ENCODE measurements at regions of chr2 and their contacts with region 1.

Region 1: DNA sequence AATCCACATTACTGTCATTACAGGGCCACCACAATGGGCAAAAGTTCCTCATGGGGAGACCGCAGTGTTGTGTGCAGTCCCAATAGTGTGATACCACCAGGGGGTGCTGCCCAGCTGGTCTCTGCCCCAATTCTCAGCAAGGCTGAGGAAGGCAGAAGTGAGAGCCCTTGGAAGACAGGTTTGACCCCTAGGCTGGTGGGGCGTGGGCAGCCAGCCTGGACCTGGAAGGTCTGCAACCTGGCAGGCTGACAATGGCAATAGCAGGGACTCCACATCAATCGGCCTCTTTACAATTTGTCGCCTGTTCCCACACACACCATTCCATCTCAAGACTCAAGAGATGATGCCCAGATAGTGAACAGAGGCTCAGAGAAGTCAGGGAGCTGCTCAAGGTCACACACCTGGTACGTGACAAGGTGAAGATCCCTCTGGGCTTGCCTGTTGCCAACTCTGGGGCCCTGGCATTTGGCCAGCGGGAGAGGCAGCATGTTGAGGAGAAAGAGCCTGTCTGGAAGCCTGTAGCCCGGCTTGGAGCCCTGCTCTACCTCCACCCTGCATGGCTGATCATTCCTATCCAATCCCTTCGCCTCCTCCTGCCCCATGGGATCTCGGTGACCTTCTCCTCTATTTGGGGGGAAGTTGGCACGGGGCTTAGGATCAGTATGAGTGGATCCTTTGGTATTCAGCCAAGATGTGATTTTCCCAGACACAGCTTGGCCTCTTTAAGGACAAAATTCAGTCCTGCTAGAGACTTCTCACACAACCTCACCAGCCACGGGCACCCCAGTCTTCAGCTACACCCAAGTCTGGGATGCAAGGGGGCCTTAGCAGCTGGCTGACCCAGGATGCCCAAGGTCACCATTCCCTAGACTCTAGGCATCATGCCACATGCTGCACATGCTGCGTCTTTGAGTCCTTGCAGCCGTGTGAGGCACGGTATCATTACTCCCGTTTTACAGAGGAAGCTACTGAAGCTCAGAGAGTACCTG is 2.9 kb upstream of the ATOH8 start:
- DNase-seq: peak; percentile 70
- ATAC-seq: peak; percentile 80
- H3K4me3 ChIP-seq: no peak overlapping the region
- H3K27ac ChIP-seq: no peak overlapping the region
- H3K4me1 ChIP-seq: peaks cover 26% of the 10 kb centered on the region
- H3K27me3 ChIP-seq: peaks cover 10 to 56% of the 10 kb centered on the region in 2 experiments; a peak in 4 of 5 replicates
- CTCF ChIP-seq: peak; percentile 94
- EP300 ChIP-seq: no peak
- POLR2A ChIP-seq: no peak
- RAD21 ChIP-seq: peak; percentile 91

Region 2: GRCh38 chr2:84939426-84940087 is 811.3 kb before region 1 on chr2:
- CTCF ChIA-PET with region 1: no interaction called
- POLR2A ChIA-PET with region 1: no interaction called
- in situ Hi-C with region 1: no loop called
- intact Hi-C with region 1: no loop called
- DNase-seq: no peak
- ATAC-seq: peak; percentile 22; the same call in 2 of the 3 replicates
- H3K4me3 ChIP-seq: no peak overlapping the region
- H3K27ac ChIP-seq: no peak overlapping the region
- H3K4me1 ChIP-seq: peaks cover 27% of the 10 kb centered on the region
- H3K27me3 ChIP-seq: no peaks in the 10 kb centered on the region
- CTCF ChIP-seq: no peak
- EP300 ChIP-seq: no peak
- POLR2A ChIP-seq: no peak
- RAD21 ChIP-seq: no peak

Region 3: DNA sequence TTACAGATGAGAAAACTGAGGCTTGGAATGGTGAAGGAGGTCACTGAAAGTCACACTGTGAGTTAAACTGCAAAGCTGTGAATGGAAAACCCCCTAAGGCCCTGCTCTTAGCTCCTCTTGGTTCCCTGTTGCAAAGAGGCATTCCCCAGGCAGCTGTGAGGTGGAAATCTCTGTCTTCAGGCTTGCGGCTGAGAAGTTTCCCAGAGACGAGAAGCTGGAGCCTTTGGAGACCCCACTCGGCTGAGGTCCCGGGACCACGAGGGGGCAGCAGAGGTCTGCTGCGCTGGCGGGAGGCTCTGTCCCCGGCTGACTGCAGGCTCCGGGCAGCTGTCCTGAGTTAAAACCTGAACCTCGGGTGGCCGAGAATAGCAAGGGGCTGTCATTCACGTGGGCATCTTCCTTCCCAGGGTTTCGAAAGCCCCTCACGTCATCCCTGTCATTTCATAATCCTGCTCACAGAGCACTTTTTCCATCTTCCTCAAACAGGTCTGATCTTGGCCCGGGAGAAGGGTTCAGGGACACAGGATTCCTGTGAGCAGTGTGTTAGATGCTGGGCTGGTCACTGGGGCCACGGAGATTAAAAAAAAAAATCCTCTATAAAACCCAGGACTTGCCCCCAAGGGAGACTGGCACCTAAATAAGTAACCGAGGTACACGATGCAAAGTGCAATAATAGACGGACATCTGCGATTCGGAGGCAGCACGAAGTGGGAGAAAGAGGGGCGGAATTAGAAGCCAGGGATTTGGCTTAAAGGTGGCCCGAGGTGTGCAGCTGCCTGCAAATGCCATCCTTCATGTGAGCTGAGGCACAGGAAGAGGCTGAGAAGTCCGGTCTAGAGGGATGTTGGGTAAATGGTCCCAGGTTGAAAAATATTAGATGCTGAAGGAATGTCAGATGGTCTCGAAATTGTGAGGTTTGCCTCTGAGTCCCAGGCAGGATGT is 21.7 kb before region 1 on chr2:
- CTCF ChIA-PET with region 1: interaction called, 14 read pairs
- POLR2A ChIA-PET with region 1: no interaction called
- in situ Hi-C with region 1: no loop called
- intact Hi-C with region 1: loop called (anchors 1 kb)
- DNase-seq: peak; percentile 65
- ATAC-seq: peak; percentile 98
- H3K4me3 ChIP-seq: no peak overlapping the region
- H3K27ac ChIP-seq: no peak overlapping the region
- H3K4me1 ChIP-seq: peaks cover 18% of the 10 kb centered on the region; the same call in 1 of the 2 replicates
- H3K27me3 ChIP-seq: peaks cover 5 to 32% of the 10 kb centered on the region in 2 experiments
- CTCF ChIP-seq: peak; percentile 98
- EP300 ChIP-seq: no peak
- POLR2A ChIP-seq: no peak
- RAD21 ChIP-seq: peak; percentile 98

Region 4: DNA sequence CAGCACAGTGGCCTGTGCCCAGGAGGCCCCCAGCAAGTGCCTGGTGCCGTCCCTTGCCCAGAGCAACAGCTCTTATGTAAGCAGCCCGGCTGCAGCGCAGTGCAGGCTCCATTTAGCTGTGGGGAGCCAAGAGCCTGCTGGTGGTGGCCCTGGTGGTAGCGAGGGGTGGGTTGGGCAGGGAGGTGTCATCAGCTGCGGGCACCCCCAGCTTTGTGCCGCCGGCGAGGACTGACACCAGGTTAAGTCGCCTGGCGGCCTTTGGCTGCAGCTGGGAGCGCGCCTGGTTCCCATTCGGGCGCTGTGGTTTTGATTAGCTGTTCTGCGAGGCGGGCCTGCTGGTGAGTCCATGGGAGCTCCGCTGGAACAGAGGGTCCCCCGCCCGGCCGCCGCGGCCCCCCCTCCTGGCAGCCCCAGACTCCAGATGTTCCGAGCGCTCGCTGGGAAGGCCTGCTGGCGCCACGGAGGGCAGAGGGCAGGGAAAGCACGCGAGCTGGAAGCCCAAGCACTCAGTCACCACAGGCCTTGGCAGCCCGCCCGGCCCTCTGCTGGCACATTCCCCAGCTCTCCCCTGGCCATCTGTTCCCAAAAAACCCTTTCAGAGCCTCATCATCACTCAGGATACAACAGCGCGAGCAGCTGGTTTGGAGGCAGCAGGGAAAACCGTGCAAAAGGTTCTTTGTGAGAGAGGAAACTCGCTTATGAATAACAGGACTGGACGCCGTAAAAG is 21.3 kb after region 1 on chr2:
- CTCF ChIA-PET with region 1: interaction called, 6 read pairs
- POLR2A ChIA-PET with region 1: interaction called, 4 read pairs
- in situ Hi-C with region 1: no loop called
- intact Hi-C with region 1: loop called (anchors 1 kb)
- DNase-seq: peak; percentile 97
- ATAC-seq: peak; percentile 84
- H3K4me3 ChIP-seq: peak overlapping the region; percentile 36 to 67 (median 43); a peak in 5 of 6 replicates
- H3K27ac ChIP-seq: no peak overlapping the region
- H3K4me1 ChIP-seq: peaks cover 60% of the 10 kb centered on the region
- H3K27me3 ChIP-seq: no peaks in the 10 kb centered on the region
- CTCF ChIP-seq: peak; percentile 55
- EP300 ChIP-seq: peak; percentile 27 to 41; a peak in 1 of 4 replicates
- POLR2A ChIP-seq: no peak
- RAD21 ChIP-seq: peak; percentile 58; the same call in 1 of the 2 replicates

Region 5: DNA sequence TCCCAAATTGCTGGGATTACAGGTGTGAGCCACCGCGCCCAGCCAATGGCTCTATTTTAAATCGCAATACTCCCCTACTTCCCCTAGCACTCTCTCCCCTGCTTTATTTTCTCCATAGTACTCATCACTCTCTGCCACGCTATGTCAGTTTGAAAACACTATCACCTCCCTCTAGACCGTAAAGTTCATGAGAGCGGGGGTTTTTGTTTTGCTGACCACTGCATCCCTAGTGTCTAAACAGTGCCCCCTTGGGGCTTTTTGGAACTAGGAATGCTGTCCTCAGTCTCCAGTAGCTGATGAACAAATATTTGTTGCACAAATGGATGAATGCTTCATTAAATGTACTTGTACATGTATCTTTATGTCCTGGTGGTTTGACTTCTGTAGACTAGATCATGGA is 47.0 kb after region 1 on chr2:
- CTCF ChIA-PET with region 1: interaction called, 13 read pairs
- POLR2A ChIA-PET with region 1: no interaction called
- in situ Hi-C with region 1: no loop called
- intact Hi-C with region 1: loop called (anchors 1 kb)
- DNase-seq: peak; percentile 77
- ATAC-seq: peak; percentile 43; the same call in 2 of the 3 replicates
- H3K4me3 ChIP-seq: no peak overlapping the region
- H3K27ac ChIP-seq: no peak overlapping the region
- H3K4me1 ChIP-seq: peaks cover 56% of the 10 kb centered on the region
- H3K27me3 ChIP-seq: no peaks in the 10 kb centered on the region; a peak in 1 of 5 replicates
- CTCF ChIP-seq: peak; percentile 64
- EP300 ChIP-seq: no peak
- POLR2A ChIP-seq: no peak
- RAD21 ChIP-seq: peak; percentile 62; the same call in 1 of the 2 replicates

Region 6: GRCh38 chr2:85804583-85804982 is 53.7 kb after region 1 on chr2:
- CTCF ChIA-PET with region 1: interaction called, 13 read pairs
- POLR2A ChIA-PET with region 1: no interaction called
- in situ Hi-C with region 1: no loop called
- intact Hi-C with region 1: no loop called
- DNase-seq: no peak
- ATAC-seq: no peak
- H3K4me3 ChIP-seq: no peak overlapping the region
- H3K27ac ChIP-seq: no peak overlapping the region
- H3K4me1 ChIP-seq: peaks cover 38% of the 10 kb centered on the region
- H3K27me3 ChIP-seq: no peaks in the 10 kb centered on the region
- CTCF ChIP-seq: peak; percentile 45
- EP300 ChIP-seq: no peak
- POLR2A ChIP-seq: no peak
- RAD21 ChIP-seq: no peak

Region 7: GRCh38 chr2:85813982-85814801 is 63.3 kb after region 1 on chr2:
- CTCF ChIA-PET with region 1: interaction called, 107 read pairs
- POLR2A ChIA-PET with region 1: no interaction called
- in situ Hi-C with region 1: loop called (anchors 5 kb)
- intact Hi-C with region 1: loop called (anchors 1 kb)
- DNase-seq: peak; percentile 82
- ATAC-seq: peak; percentile 97
- H3K4me3 ChIP-seq: no peak overlapping the region
- H3K27ac ChIP-seq: no peak overlapping the region
- H3K4me1 ChIP-seq: peaks cover 24% of the 10 kb centered on the region
- H3K27me3 ChIP-seq: peaks cover 0 to 17% of the 10 kb centered on the region in 2 experiments; a peak in 1 of 5 replicates
- CTCF ChIP-seq: peak; percentile 99
- EP300 ChIP-seq: peak in 1 of 2 experiments; percentile 36; a peak in 1 of 4 replicates
- POLR2A ChIP-seq: no peak
- RAD21 ChIP-seq: peak; percentile 99

Region 8: GRCh38 chr2:85840091-85840490 is 89.2 kb after region 1 on chr2:
- CTCF ChIA-PET with region 1: no interaction called
- POLR2A ChIA-PET with region 1: no interaction called
- in situ Hi-C with region 1: no loop called
- intact Hi-C with region 1: no loop called
- DNase-seq: no peak
- ATAC-seq: no peak
- H3K4me3 ChIP-seq: no peak overlapping the region
- H3K27ac ChIP-seq: no peak overlapping the region
- H3K4me1 ChIP-seq: no peaks in the 10 kb centered on the region
- H3K27me3 ChIP-seq: no peaks in the 10 kb centered on the region
- CTCF ChIP-seq: no peak
- EP300 ChIP-seq: no peak
- POLR2A ChIP-seq: no peak
- RAD21 ChIP-seq: no peak

Region 9: GRCh38 chr2:85852937-85853498 is 102.1 kb after region 1 on chr2:
- CTCF ChIA-PET with region 1: no interaction called
- POLR2A ChIA-PET with region 1: no interaction called
- in situ Hi-C with region 1: no loop called
- intact Hi-C with region 1: no loop called
- DNase-seq: no peak
- ATAC-seq: peak; percentile 47
- H3K4me3 ChIP-seq: no peak overlapping the region; a peak in 1 of 6 replicates
- H3K27ac ChIP-seq: no peak overlapping the region
- H3K4me1 ChIP-seq: no peaks in the 10 kb centered on the region; the same call in 1 of the 2 replicates
- H3K27me3 ChIP-seq: no peaks in the 10 kb centered on the region; a peak in 1 of 5 replicates
- CTCF ChIP-seq: no peak
- EP300 ChIP-seq: no peak
- POLR2A ChIP-seq: no peak
- RAD21 ChIP-seq: no peak

Measured in HepG2 (cell line).